H1 (cell line): ENCODE measurements at regions of chr1 and their contacts with region 1.

Region 1: DNA sequence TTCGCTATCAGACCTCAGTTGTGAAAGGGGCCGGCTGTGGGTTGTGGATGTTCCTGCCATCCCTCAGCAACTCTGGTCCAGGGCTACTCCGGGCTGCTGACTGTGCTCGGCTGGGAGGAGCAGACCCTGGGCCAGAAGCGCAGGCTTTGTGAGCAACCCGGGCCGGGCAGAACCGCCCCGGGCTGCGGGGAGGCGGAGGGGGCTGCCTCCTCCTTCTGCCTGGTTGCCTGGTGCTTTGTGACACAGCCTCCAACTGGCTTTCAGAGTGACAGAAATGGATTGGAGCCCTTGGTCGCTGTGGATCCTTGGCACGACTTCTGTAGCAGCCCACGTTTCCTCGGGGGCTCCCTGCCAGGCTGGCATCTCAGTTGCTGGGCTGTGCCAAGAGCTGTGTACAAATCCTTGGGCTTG is 10.0 kb downstream of the DRAXIN start:
- DNase-seq: no peak
- H3K4me3 ChIP-seq: no peak overlapping the region
- H3K27ac ChIP-seq: no peak overlapping the region
- H3K4me1 ChIP-seq: peaks cover 7 to 41% (median 29%) of the 10 kb centered on the region in 4 experiments
- H3K27me3 ChIP-seq: no peaks in the 10 kb centered on the region; a peak in 1 of 7 replicates
- CTCF ChIP-seq: no peak
- EP300 ChIP-seq: no peak
- POLR2A ChIP-seq: no peak
- RAD21 ChIP-seq: no peak

Region 2: DNA sequence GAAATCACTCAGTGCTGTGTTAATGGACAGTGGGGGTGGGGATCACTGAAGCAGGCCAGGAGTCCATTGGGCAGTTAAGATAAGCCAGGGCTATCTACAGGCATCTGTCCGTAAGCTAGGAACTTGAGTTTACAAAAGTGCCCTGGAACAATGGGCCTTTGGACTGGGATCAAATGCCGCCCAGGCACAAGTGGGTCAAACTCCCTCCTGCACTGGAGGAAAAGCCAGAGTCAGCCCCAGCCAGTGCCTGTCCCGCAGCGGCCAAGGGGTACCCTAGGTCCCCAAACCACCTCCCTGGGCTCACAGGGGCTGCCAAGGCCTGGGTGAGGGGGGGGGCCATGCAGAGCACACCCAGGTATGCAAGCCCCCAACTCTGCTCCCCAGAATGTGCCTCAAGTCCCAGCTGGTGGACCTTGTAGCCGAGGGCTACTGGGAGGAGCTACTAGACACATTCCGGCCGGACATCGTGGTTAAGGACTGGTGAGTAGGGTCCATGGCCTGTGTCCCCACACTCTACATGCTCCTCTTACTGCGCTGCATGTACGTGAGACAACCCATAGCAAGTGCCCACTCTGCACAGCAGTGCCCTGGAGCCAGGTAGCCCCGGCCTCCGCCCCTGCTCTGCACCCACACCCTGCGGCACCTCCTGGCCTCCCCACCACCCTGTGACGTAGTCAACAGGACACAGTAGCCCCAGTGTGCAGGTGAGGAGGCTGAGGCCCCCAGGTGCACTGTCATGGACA is 29.8 kb before region 1 on chr1:
- CTCF ChIA-PET with region 1: interaction called, 266 read pairs
- POLR2A ChIA-PET with region 1: interaction called, 1,025 read pairs
- DNase-seq: no peak
- H3K4me3 ChIP-seq: no peak overlapping the region
- H3K27ac ChIP-seq: no peak overlapping the region
- H3K4me1 ChIP-seq: no peaks in the 10 kb centered on the region; a peak in 2 of 7 replicates
- H3K27me3 ChIP-seq: no peaks in the 10 kb centered on the region
- CTCF ChIP-seq: no peak
- EP300 ChIP-seq: no peak
- POLR2A ChIP-seq: peak in 1 of 2 experiments; percentile 64; a peak in 2 of 3 replicates
- RAD21 ChIP-seq: no peak

Region 3: GRCh38 chr1:11730429-11730891 is 28.9 kb after region 1 on chr1:
- CTCF ChIA-PET with region 1: interaction called, 13 read pairs
- POLR2A ChIA-PET with region 1: interaction called, 4 read pairs
- DNase-seq: no peak
- H3K4me3 ChIP-seq: no peak overlapping the region
- H3K27ac ChIP-seq: no peak overlapping the region
- H3K4me1 ChIP-seq: peaks cover 4 to 37% (median 26%) of the 10 kb centered on the region in 4 experiments
- H3K27me3 ChIP-seq: no peaks in the 10 kb centered on the region
- CTCF ChIP-seq: no peak
- EP300 ChIP-seq: no peak
- POLR2A ChIP-seq: no peak
- RAD21 ChIP-seq: no peak